ENCODE measurements at regions of chr12 and their contacts with region 1.

Region 1: DNA sequence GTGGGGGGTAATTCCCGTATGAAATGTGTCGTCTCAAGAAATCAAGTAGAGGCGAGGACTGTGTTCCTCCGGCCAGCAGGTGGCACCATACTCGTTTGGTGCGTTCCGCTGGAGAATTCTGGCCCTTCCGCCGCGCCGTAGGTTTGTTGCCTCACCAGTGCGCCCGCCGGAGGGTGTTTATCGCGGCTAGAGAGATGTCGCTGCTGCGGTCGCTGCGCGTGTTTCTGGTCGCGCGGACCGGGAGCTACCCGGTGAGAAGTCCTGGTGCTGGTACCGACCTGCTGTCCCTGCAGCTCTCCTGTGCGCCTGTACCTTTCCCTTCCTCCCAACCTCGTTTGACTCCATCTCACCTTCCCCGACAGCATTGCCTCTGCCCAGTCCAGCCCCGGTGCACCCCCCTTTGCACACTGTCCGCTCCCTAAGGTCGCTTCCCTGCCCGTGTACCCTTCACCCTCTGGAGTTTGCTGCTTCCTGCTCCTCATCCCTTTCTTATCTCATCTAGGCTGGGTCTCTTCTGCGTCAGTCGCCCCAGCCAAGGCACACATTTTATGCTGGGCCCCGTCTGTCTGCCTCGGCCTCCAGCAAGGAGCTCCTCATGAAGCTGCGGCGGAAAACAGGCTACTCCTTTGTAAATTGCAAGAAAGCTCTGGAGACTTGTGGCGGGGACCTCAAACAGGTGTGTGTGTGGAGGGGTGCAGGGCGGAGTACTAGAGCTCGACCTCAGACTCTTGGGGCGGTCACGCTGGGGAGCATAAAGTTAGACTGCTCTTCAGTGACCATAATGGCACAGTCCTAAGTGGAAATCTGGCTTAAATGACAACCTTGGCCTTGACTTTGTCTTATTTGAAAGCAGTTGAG is at the start of gene TSFM:
- DNase-seq: peak; percentile 99
- ATAC-seq: peak; percentile 95
- H3K4me3 Mint-ChIP-seq: peak within 1 kb of the TSS; percentile 99
- H3K27ac Mint-ChIP-seq: peak within 1 kb of the TSS; percentile 96
- H3K4me1 Mint-ChIP-seq: peaks cover 28% of the 10 kb centered on the region
- H3K27me3 Mint-ChIP-seq: no peaks in the 10 kb centered on the region
- CTCF ChIP-seq: peak; percentile 97
- total RNA-seq, gene TSFM: 46.3 to 47.3 TPM

Region 2: GRCh38 chr12:57514720-57515467 is 267.9 kb before region 1 on chr12:
- CTCF ChIA-PET with region 1: no interaction called
- POLR2A ChIA-PET with region 1: no interaction called
- intact Hi-C with region 1: no loop called
- DNase-seq: no peak
- ATAC-seq: no peak
- H3K4me3 Mint-ChIP-seq: no peak overlapping the region
- H3K27ac Mint-ChIP-seq: peak overlapping the region; percentile 23
- H3K4me1 Mint-ChIP-seq: peaks cover 30% of the 10 kb centered on the region
- H3K27me3 Mint-ChIP-seq: no peaks in the 10 kb centered on the region
- CTCF ChIP-seq: no peak

Region 3: GRCh38 chr12:57765042-57765697 is 17.7 kb before region 1 on chr12:
- CTCF ChIA-PET with region 1: interaction called, 122 read pairs
- POLR2A ChIA-PET with region 1: interaction called, 5 read pairs
- intact Hi-C with region 1: no loop called
- DNase-seq: peak; percentile 70
- ATAC-seq: peak; percentile 72
- H3K4me3 Mint-ChIP-seq: peak overlapping the region; percentile 80
- H3K27ac Mint-ChIP-seq: peak overlapping the region; percentile 70
- H3K4me1 Mint-ChIP-seq: peaks cover 28% of the 10 kb centered on the region
- H3K27me3 Mint-ChIP-seq: peaks cover 6% of the 10 kb centered on the region
- CTCF ChIP-seq: peak; percentile 55

Region 4: DNA sequence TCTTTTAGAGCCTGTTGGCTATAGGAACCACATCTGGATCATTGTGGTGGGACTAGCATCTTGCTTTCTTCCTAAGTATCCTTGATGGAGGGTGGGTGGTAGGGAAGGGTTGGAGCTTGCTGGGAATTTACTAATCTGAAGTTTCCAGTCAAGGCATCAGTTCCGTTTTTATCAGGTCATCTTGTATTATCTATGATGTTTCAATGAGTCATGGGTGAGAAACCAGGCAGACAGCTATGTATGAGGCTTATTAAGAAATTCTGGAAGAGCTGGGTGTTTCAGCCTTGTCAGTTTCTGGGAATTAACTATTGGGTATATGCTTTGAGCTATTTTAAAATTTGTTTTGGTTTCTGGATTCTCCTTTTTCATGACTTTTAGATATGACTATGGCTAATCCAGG is 11.1 kb after region 1 on chr12:
- CTCF ChIA-PET with region 1: interaction called, 16 read pairs
- POLR2A ChIA-PET with region 1: interaction called, 7 read pairs
- intact Hi-C with region 1: no loop called
- DNase-seq: no peak
- ATAC-seq: no peak
- H3K4me3 Mint-ChIP-seq: no peak overlapping the region
- H3K27ac Mint-ChIP-seq: no peak overlapping the region
- H3K4me1 Mint-ChIP-seq: peaks cover 15% of the 10 kb centered on the region
- H3K27me3 Mint-ChIP-seq: no peaks in the 10 kb centered on the region
- CTCF ChIP-seq: no peak

Region 5: DNA sequence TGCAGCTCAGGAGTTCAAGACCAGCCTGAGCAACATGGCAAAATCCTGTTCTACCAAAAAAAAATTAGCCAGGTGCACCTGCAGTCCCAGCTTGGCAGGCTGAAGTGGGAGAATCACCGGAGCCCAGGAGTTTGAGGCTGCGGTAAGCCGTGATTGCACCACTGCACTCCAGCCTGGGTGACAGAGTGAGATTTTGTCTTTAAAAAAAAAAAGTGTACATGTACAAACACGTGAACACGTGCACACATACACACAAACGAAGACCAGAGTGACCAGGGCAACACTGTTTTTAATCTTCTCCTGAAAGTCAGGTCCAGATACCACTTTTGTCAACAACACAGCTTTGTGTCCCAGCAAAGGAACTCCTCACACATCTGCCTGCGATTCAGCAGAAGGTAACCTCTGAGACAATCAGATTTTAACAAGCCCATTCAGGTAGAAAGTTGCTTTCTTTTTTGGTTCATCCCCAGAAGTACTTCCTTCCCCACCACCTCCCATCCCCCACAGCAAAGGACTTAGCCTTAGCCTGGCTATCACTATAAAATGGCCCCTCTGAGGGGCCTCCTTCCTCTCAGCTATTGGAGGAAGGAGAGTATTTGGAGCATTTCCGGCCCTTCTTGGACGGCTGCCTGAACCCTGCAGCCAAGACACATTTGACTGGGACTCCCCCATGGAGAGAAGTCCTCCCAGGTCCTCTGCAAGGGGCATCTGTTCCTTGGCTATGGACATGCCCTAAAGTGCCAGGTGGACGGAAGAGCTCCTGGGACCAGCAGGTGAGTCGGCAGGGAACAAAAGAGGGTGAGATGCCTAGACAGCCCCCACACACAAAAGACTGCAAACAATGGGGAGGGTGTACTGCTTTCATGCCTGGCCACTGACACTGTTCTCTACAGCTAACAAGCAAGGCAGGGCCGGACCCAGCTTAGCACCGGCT is 53.9 kb after region 1 on chr12:
- CTCF ChIA-PET with region 1: interaction called, 17 read pairs
- POLR2A ChIA-PET with region 1: interaction called, 10 read pairs
- intact Hi-C with region 1: no loop called
- DNase-seq: peak; percentile 79
- ATAC-seq: peak; percentile 70
- H3K4me3 Mint-ChIP-seq: peak overlapping the region; percentile 62
- H3K27ac Mint-ChIP-seq: peak overlapping the region; percentile 91
- H3K4me1 Mint-ChIP-seq: peaks cover 90% of the 10 kb centered on the region
- H3K27me3 Mint-ChIP-seq: no peaks in the 10 kb centered on the region
- CTCF ChIP-seq: no peak

Measured in activated CD8-positive, alpha-beta T cell treated with anti-CD3 and anti-CD28 coated beads for 36 hours (primary cell).